Activated T-helper 2 cell treated with anti-CD3 and anti-CD28 coated beads, Interferon-gamma antibody, Interleukin-2, Interleukin-4, amounts not matched to agents 10 μg/mL and 5 μg/mL and 100 μg/mL, durations not matched to agents 14 hours and 24 hours and 36 hours (primary cell): ENCODE measurements at regions of chr19 and their contacts with region 1.

Region 1: GRCh38 chr19:34269968-34270621 is 15.7 kb downstream of the GARRE1 start:
- DNase-seq: peak; percentile 52
- H3K4me3 Mint-ChIP-seq: no peak overlapping the region
- H3K27ac Mint-ChIP-seq: peak overlapping the region; percentile 23
- H3K4me1 Mint-ChIP-seq: peaks cover 18% of the 10 kb centered on the region
- H3K27me3 Mint-ChIP-seq: peaks cover 12% of the 10 kb centered on the region

Region 2: DNA sequence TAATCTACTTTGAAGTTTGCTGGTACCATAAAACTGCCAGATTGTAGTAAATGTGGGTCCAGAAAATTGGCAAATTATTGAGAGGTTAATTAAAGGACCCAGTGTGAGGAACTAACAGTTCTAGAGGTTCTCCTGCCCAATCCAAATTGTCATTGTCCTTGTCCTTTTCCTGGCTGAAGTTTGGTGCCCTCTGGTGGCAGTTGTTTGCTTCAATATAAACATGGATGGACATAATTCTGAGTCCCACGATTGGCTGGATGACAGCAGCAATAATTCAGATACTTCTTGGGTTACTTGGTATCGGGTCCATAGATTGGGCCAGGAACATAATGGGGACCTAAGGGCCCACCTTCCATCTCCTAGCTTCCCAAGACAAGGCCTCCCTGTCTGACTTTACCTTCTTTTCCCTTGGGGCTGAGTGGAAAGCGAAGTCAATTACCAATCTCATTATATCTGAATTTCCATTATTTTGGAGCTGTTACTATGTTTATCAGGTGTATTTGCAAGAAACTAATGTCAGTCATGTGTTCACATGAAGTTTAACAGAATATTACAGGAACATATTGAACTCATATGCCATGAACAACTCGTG is 49.5 kb before region 1 on chr19:
- intact Hi-C with region 1: loop called (anchors 10 kb)
- DNase-seq: peak; percentile 24
- H3K4me3 Mint-ChIP-seq: no peak overlapping the region
- H3K27ac Mint-ChIP-seq: no peak overlapping the region
- H3K4me1 Mint-ChIP-seq: peaks cover 44% of the 10 kb centered on the region
- H3K27me3 Mint-ChIP-seq: no peaks in the 10 kb centered on the region

Region 3: GRCh38 chr19:34241513-34242337 is 28.4 kb before region 1 on chr19:
- intact Hi-C with region 1: no loop called
- DNase-seq: no peak
- H3K4me3 Mint-ChIP-seq: no peak overlapping the region
- H3K27ac Mint-ChIP-seq: no peak overlapping the region
- H3K4me1 Mint-ChIP-seq: no peaks in the 10 kb centered on the region
- H3K27me3 Mint-ChIP-seq: no peaks in the 10 kb centered on the region

Region 4: DNA sequence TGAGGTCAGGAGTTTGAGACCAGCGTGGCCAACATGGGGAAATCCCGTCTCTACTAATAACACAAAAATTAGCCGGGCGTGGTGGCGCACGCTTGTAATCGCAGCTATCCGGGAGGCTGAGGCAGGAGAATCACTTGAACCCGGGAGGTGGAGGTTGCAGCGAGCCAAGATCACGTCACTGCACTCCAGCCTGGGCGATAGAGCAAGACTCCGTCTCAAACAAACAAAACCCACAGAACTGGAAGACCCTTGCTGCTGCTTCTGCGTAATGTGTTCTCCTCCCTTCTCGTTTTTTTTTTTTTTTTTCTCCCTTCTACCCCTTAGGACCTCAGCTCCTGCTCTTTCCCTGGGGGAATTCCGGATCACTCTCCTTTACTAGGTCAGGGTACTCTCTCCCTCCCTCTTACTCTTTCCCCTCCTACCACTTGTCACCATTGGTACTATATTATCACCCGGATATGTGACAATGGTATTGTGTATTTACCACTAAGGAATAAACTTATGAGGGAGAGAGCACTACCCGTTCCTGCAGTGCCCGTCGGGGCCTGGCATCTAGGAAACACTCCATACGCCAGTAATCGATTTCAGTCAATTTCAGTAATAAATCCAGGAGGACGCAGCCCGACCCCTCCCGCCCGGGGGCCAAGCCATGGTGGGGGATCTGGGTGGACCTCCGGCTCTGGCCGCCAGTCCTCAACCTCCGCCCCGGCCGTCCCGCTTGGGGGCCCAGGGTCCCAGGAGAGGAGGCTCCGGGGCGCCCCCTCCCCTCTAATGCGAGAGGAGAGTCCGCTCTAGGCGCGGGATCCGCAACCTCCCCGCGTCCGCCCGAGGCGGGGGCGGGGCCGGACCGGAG is 16.2 kb before region 1 on chr19:
- intact Hi-C with region 1: loop called (anchors 1 kb)
- DNase-seq: peak; percentile 75
- H3K4me3 Mint-ChIP-seq: peak overlapping the region; percentile 95
- H3K27ac Mint-ChIP-seq: peak overlapping the region; percentile 93
- H3K4me1 Mint-ChIP-seq: peaks cover 3% of the 10 kb centered on the region
- H3K27me3 Mint-ChIP-seq: peaks cover 2% of the 10 kb centered on the region